Mammary epithelial cell (primary cell): ENCODE measurements at regions of chr9 and their contacts with region 1.

Region 1: DNA sequence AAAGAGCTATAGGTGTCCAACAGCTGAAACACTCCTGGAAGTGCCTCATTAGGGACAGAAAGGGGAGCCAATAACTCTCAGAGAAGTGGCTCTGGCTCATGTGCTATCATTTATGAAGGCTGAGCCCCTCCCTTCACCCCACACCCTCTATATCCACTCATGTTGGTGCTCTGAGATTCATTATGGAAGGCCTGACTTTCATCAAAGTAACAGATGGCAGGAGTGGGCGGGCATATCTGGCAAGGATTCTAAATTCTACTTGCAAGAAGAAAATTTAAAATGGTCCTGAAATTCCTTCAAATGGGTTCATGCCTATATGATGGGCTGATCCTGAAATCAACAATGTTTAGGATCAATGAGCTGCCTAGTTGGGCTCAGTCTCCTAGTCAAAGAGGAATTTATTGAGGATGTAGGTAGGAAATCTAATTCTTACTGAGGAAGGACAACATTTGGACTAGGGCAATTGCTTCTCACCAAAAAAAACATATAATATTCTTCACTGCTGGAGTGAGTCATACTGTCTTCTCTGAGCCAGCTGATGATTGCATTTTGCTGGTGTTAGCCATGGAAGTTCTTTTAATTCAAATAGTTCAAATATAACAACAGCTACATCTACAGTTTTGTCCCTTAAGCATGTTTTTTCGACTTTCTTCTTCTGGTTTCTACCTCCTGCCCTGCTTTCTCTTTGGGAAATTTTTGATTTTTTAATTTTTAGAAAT is 23.5 kb downstream of the NMRK1 start:
- DNase-seq: peak; percentile 32
- H3K4me3 ChIP-seq: no peak overlapping the region
- H3K27ac ChIP-seq: no peak overlapping the region
- H3K4me1 ChIP-seq: peaks cover 10% of the 10 kb centered on the region
- H3K27me3 ChIP-seq: no peaks in the 10 kb centered on the region
- CTCF ChIP-seq: no peak

Region 2: GRCh38 chr9:74985041-74985440 is 79.4 kb before region 1 on chr9:
- CTCF ChIA-PET with region 1: no interaction called
- dilution Hi-C with region 1: no loop called
- in situ Hi-C with region 1: no loop called
- intact Hi-C with region 1: no loop called
- DNase-seq: peak; percentile 11
- H3K4me3 ChIP-seq: no peak overlapping the region
- H3K27ac ChIP-seq: no peak overlapping the region
- H3K4me1 ChIP-seq: no peaks in the 10 kb centered on the region
- H3K27me3 ChIP-seq: peaks cover 2% of the 10 kb centered on the region
- CTCF ChIP-seq: no peak

Region 3: DNA sequence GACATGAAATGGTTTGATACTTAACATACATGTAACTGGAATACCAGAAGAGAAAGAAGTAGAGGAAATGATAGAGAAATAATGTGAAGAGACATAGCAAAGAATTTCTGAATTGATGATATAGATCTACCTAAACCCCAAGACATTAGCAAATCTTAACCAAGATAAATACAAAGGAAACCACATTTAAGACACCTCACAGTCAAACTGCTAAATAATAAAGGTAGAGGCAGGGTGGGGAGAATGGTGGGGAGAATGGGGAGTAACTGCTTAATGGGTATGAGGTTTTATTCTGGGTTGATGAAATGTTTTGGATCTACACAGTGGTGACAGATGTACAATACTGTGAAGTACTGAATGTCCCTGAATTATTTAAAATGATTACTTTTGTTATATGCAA is 53.9 kb before region 1 on chr9:
- CTCF ChIA-PET with region 1: no interaction called
- dilution Hi-C with region 1: no loop called
- in situ Hi-C with region 1: no loop called
- intact Hi-C with region 1: loop called (anchors 5 kb)
- DNase-seq: no peak
- H3K4me3 ChIP-seq: no peak overlapping the region
- H3K27ac ChIP-seq: no peak overlapping the region
- H3K4me1 ChIP-seq: no peaks in the 10 kb centered on the region
- H3K27me3 ChIP-seq: no peaks in the 10 kb centered on the region
- CTCF ChIP-seq: no peak

Region 4: DNA sequence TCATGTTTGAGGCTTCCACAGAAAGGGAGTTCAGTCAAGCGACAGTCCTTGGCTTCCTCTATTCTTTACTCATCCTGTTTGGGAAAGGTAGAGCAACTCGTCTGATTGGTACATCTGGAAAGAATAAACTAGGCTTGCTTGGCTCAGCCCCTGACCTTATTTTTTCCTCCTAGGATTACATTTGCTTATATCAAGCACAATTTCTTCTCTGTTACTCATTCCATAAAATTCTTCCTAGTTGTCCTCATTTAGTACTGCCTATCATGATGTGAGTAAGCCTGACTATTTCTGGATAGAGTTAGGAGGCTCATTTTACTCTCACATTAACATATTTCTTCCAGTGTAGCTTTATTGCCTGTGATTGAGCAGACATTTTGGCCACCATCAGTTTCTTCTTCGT is 25.5 kb before region 1 on chr9:
- CTCF ChIA-PET with region 1: no interaction called
- dilution Hi-C with region 1: no loop called
- in situ Hi-C with region 1: no loop called
- intact Hi-C with region 1: no loop called
- DNase-seq: no peak
- H3K4me3 ChIP-seq: no peak overlapping the region
- H3K27ac ChIP-seq: no peak overlapping the region
- H3K4me1 ChIP-seq: no peaks in the 10 kb centered on the region
- H3K27me3 ChIP-seq: no peaks in the 10 kb centered on the region
- CTCF ChIP-seq: no peak

Region 5: DNA sequence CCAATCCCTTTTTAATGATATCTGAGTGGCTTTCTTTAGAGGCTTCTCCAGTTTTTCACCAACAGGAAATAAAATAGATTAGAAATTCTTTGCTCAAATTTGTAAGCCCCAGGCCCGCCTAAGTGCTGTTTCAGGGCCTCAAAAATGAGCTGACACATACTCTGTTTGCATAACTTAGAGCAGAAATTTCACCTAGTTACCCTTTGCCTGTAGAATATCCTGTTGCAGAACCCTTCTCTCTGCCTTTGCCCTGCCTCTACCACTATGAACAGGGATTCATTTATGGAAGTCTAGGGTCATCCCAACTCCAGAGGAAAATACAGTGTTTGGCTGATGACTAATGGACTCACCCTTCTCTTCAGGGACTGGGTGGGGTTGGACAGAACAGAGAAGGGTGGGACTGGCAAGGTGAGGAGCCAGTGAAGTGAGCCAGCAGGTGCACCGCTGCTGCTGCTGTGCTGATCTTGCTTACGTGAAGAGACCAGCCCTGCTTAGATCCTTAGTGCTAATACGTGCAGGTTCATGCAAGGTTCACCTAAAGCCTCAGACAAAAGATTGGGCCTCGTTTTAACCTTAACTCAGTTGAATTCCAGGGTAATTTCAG is 46.7 kb after region 1 on chr9:
- CTCF ChIA-PET with region 1: no interaction called
- dilution Hi-C with region 1: no loop called
- in situ Hi-C with region 1: no loop called
- intact Hi-C with region 1: no loop called
- DNase-seq: peak; percentile 74
- H3K4me3 ChIP-seq: no peak overlapping the region
- H3K27ac ChIP-seq: peak overlapping the region; percentile 36
- H3K4me1 ChIP-seq: peaks cover 19% of the 10 kb centered on the region
- H3K27me3 ChIP-seq: no peaks in the 10 kb centered on the region
- CTCF ChIP-seq: no peak